K562 (cell line): ENCODE measurements at regions of chr7 and their contacts with region 1.

Region 1: GRCh38 chr7:71770269-71770907 is 638.4 kb downstream of the GALNT17 start:
- DNase-seq: no peak
- ATAC-seq: no peak
- H3K4me3 ChIP-seq: no peak overlapping the region
- H3K27ac ChIP-seq: no peak overlapping the region
- H3K4me1 ChIP-seq: no peaks in the 10 kb centered on the region
- H3K27me3 ChIP-seq: peaks cover 3 to 6% of the 10 kb centered on the region in 2 experiments; a peak in 4 of 5 replicates
- CTCF ChIP-seq: no peak
- EP300 ChIP-seq: no peak
- POLR2A ChIP-seq: no peak
- RAD21 ChIP-seq: no peak

Region 2: GRCh38 chr7:71486856-71487628 is 283.3 kb before region 1 on chr7:
- CTCF ChIA-PET with region 1: no interaction called
- POLR2A ChIA-PET with region 1: no interaction called
- in situ Hi-C with region 1: no loop called
- intact Hi-C with region 1: no loop called
- DNase-seq: no peak
- ATAC-seq: no peak
- H3K4me3 ChIP-seq: no peak overlapping the region
- H3K27ac ChIP-seq: no peak overlapping the region
- H3K4me1 ChIP-seq: no peaks in the 10 kb centered on the region
- H3K27me3 ChIP-seq: no peaks in the 10 kb centered on the region
- CTCF ChIP-seq: no peak
- EP300 ChIP-seq: no peak
- POLR2A ChIP-seq: no peak
- RAD21 ChIP-seq: no peak

Region 3: GRCh38 chr7:71723859-71724258 is 46.5 kb before region 1 on chr7:
- CTCF ChIA-PET with region 1: no interaction called
- POLR2A ChIA-PET with region 1: no interaction called
- in situ Hi-C with region 1: no loop called
- intact Hi-C with region 1: no loop called
- DNase-seq: no peak
- ATAC-seq: no peak
- H3K4me3 ChIP-seq: no peak overlapping the region
- H3K27ac ChIP-seq: no peak overlapping the region
- H3K4me1 ChIP-seq: no peaks in the 10 kb centered on the region
- H3K27me3 ChIP-seq: no peaks in the 10 kb centered on the region
- CTCF ChIP-seq: no peak
- EP300 ChIP-seq: no peak
- POLR2A ChIP-seq: no peak
- RAD21 ChIP-seq: no peak

Region 4: DNA sequence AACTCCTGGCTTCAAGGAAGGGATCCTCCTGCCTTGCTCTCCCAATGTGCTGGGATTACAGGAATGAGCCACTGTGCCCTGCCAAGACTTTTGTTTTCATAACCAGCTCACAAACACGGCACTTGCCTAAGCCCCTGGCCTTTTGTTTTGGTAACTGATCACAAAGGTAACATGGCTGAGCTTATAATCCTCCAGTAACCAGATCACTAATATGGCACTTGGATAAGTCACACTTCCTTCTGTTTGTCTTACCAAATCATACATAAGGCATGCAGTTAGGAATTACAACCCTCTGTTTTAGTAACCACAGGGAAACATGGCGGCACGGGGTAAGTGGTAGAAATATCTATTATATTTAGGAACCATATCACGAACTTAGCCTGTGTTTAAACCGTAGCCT is 64.7 kb after region 1 on chr7:
- CTCF ChIA-PET with region 1: no interaction called
- POLR2A ChIA-PET with region 1: no interaction called
- in situ Hi-C with region 1: no loop called
- intact Hi-C with region 1: loop called (anchors 10 kb)
- DNase-seq: no peak
- ATAC-seq: no peak
- H3K4me3 ChIP-seq: no peak overlapping the region
- H3K27ac ChIP-seq: no peak overlapping the region
- H3K4me1 ChIP-seq: no peaks in the 10 kb centered on the region
- H3K27me3 ChIP-seq: peaks cover 0 to 7% of the 10 kb centered on the region in 2 experiments; a peak in 3 of 5 replicates
- CTCF ChIP-seq: no peak
- EP300 ChIP-seq: no peak
- POLR2A ChIP-seq: no peak
- RAD21 ChIP-seq: no peak